ENCODE measurements at regions of chr15 and their contacts with region 1.

Region 1: DNA sequence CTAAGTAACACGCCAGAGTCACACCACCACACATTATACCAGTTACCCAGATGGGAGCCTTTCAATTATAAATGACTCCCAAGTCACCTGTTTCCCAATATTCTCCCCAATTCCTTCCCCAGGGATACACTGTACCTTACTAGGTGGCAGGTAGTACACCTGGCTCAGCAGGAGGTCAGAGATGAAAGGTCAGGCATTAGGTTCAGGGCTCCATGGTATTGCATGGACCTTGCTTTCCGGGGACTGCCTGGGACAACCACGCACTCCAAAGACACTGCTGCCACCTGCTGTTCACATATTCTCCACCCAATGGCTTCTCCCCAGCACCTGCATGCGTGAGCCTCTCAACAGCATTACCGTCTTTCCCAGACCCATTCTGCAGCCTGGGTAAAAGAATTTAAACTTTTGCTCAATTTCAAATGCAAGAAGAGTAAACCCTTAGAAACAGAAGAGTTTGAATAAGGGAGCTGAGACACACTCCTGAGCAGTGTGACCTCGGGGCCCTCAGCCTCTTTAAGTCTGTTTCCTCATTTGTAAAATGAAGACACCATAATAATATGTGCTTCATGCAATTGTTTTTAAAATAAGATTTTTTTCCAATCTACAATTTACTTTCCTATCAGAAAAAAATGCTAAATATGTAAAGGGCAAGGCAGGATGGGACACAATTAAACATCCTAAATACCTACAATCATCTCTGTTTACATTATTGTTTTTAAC is 28.0 kb upstream of the LACTB start:
- DNase-seq: peak; percentile 87
- ATAC-seq: peak; percentile 89
- H3K4me3 Mint-ChIP-seq: no peak overlapping the region
- H3K27ac Mint-ChIP-seq: no peak overlapping the region
- H3K4me1 Mint-ChIP-seq: peaks cover 3% of the 10 kb centered on the region
- H3K27me3 Mint-ChIP-seq: no peaks in the 10 kb centered on the region
- CTCF ChIP-seq: peak; percentile 86

Region 2: GRCh38 chr15:62782039-62782791 is 311.4 kb before region 1 on chr15:
- CTCF ChIA-PET with region 1: interaction called, 5 read pairs
- POLR2A ChIA-PET with region 1: no interaction called
- intact Hi-C with region 1: loop called (anchors 5 kb)
- DNase-seq: peak; percentile 25
- ATAC-seq: peak; percentile 62
- H3K4me3 Mint-ChIP-seq: no peak overlapping the region
- H3K27ac Mint-ChIP-seq: no peak overlapping the region
- H3K4me1 Mint-ChIP-seq: no peaks in the 10 kb centered on the region
- H3K27me3 Mint-ChIP-seq: no peaks in the 10 kb centered on the region
- CTCF ChIP-seq: peak; percentile 43

Region 3: GRCh38 chr15:62847900-62848489 is 245.7 kb before region 1 on chr15:
- CTCF ChIA-PET with region 1: interaction called, 34 read pairs
- POLR2A ChIA-PET with region 1: no interaction called
- intact Hi-C with region 1: loop called (anchors 5 kb)
- DNase-seq: peak; percentile 81
- ATAC-seq: no peak
- H3K4me3 Mint-ChIP-seq: no peak overlapping the region
- H3K27ac Mint-ChIP-seq: no peak overlapping the region
- H3K4me1 Mint-ChIP-seq: no peaks in the 10 kb centered on the region
- H3K27me3 Mint-ChIP-seq: peaks cover 7% of the 10 kb centered on the region
- CTCF ChIP-seq: peak; percentile 62

Region 4: GRCh38 chr15:63056794-63057193 is 36.9 kb before region 1 on chr15:
- CTCF ChIA-PET with region 1: interaction called, 10 read pairs
- POLR2A ChIA-PET with region 1: no interaction called
- intact Hi-C with region 1: no loop called
- DNase-seq: no peak
- ATAC-seq: no peak
- H3K4me3 Mint-ChIP-seq: no peak overlapping the region
- H3K27ac Mint-ChIP-seq: no peak overlapping the region
- H3K4me1 Mint-ChIP-seq: no peaks in the 10 kb centered on the region
- H3K27me3 Mint-ChIP-seq: no peaks in the 10 kb centered on the region
- CTCF ChIP-seq: no peak

Measured in activated CD8-positive, alpha-beta T cell treated with anti-CD3 and anti-CD28 coated beads for 36 hours (primary cell).